Heart right ventricle (tissue), 16 donors: ENCODE measurements at regions of chr2 and their contacts with region 1.

Region 1: DNA sequence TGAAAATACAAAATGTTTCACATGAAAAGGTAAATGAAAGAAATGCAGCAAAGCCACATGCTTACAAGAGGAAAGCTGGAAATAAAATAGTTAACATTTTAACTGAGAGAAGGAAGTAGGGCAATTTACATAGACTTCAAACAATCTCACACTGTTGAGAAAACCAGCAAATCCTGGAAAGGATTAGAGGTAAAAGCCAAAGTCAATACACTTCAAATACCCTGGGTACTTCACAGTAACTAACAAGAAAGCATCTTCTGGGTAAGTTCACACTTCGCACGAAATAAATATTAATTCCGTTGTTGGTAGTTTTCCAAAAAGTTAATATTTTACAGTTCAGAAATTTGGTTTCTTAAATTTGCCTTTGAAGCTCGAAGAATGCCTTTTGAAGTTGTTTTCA is 3.5 kb upstream of the ERICH2 start:
- DNase-seq: no peak
- ATAC-seq: no peak
- H3K4me3 ChIP-seq: no peak overlapping the region
- H3K27ac ChIP-seq: no peak overlapping the region
- H3K4me1 ChIP-seq: peaks cover 0 to 19% (median 10%) of the 10 kb centered on the region in 9 donors
- H3K27me3 ChIP-seq: peaks cover 0 to 32% (median 3%) of the 10 kb centered on the region in 7 donors
- CTCF ChIP-seq: no peak

Region 2: DNA sequence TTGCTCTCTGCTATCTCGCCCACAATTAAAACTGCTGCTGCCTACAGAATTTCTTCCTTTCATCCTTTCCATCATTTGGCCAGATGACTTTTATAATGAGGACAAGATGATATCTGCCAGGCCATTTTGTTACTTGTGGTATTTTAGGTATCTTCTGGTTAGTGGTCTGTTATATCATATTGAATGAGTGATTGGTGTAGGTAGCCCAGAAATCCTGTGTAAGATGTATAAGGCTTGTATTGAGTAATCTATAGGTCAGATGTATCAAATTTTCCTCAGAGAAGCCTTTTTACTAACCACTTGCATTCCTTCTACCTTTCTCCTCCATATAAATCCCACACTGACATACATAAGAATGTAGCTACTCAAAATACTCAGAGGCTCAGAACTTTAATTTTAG is 821.2 kb before region 1 on chr2:
- intact Hi-C with region 1: no loop called
- DNase-seq: no peak
- ATAC-seq: no peak
- H3K4me3 ChIP-seq: no peak overlapping the region
- H3K27ac ChIP-seq: no peak overlapping the region
- H3K4me1 ChIP-seq: peaks cover 0 to 18% (median 4%) of the 10 kb centered on the region in 9 donors
- H3K27me3 ChIP-seq: no peaks in the 10 kb centered on the region
- CTCF ChIP-seq: no peak

Region 3: DNA sequence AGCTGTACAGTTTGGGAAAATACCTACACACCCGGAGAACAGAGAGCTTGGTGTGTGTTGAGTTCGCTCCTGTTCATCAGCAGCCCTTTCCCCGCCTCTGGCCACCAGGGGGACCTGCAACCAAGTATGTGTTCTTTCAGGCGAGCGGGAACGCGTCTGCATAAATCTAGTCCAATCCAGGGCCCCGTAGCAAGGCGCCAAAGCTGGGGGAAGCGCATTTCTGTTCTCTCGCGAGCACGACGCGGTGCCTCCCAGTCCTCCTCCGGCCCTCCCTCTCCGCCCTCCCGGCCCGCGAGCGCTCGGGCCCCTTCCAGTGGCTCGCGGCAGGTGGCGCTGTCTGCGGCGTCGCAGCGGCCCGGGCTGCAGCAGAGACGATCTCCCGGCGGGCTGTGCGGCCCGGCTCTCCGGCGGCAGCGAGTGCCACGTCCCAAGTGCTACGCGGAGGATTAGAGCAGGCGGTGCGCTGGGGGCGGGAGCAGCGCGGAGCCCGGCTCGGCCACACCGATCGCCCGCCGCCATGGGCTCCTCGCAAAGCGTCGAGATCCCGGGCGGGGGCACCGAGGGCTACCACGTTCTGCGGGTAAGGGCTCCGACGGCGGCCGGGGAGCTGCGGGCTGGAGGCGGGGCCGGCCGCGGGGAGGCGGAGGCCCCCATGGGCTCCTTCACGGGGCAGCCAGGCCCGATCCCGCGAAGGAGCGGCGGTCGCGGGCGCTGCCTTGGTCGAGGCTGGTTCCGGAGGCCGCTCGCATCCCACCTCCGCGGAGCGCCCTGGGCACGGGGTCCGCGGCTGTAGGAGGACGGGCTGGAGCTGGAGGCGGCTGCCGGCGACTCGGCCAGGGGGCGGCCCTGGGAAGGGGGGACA is 162.4 kb after region 1 on chr2 and contains the start of gene GORASP2:
- intact Hi-C with region 1: loop called in 1 of 10 experiments (anchors 10 kb)
- DNase-seq: peak; percentile 97 to 99
- ATAC-seq: peak; percentile 97 to 99 (median 98)
- H3K4me3 ChIP-seq: peak within 1 kb of the TSS; percentile 73 to 98 (median 88)
- H3K27ac ChIP-seq: peak within 1 kb of the TSS; percentile 82 to 98 (median 94)
- H3K4me1 ChIP-seq: peaks cover 3 to 47% (median 38%) of the 10 kb centered on the region in 9 donors
- H3K27me3 ChIP-seq: no peaks in the 10 kb centered on the region
- CTCF ChIP-seq: peak; percentile 93 to 98 (median 97)
- total RNA-seq, gene GORASP2: 54.2 to 74.1 (median 62.1) TPM